ENCODE measurements at regions of chr4 and their contacts with region 1.

Region 1: DNA sequence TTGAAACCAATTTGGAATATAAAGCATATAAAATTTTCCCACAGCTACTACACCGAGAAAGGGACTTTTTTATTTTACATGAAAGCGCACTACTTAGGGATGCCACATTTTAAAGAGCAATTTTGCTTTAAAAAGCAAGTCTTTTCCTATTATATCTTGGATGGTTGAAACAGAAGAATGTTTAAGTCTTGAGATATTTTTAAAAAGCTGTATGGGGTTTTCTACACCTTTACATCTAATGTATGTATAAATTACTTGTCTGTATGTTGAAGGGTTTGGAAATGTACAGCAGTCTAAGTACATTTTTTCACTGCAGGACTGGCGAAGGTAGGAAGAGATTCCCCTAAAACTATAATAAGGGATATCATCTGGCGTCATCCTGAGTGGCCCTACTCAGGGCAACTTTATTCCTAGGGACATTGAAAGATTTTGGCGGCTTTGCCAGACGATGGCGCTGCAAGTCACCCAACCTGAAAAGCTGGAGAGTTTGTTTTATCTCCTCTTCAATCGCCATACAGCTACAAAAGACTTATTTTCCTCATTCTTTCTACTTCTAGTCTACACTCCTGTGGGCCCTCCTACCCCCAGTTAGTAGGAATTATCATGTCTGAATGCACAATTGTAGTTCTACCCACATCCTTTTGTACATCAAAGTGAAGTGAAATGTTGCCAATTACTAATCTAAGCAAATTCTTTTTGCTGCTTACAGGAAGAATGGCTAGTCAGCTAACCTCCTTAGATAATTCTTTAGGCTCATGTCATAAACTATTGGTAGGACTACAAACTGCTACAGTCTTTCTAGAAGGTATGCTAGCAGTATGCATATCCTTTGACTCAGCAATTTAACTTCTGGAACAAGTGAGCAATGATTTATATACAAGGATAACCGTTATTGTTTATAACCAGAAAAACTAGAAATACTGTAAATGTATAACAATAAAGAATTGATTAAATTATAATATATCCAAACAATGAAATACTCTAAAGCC is 782 bp upstream of the NEK1 start:
- DNase-seq: peak; percentile 67 to 86
- ATAC-seq: peak; percentile 40 to 55 (median 40)
- H3K4me3 ChIP-seq: peak overlapping the region; percentile 96
- H3K4me3 Mint-ChIP-seq: peak overlapping the region; percentile 98
- H3K27ac ChIP-seq: peak overlapping the region; percentile 99
- H3K27ac Mint-ChIP-seq: peak overlapping the region; percentile 98
- H3K4me1 ChIP-seq: peaks cover 4% of the 10 kb centered on the region
- H3K4me1 Mint-ChIP-seq: peaks cover 26 to 29% of the 10 kb centered on the region in 2 donors
- H3K27me3 ChIP-seq: no peaks in the 10 kb centered on the region
- H3K27me3 Mint-ChIP-seq: no peaks in the 10 kb centered on the region
- CTCF ChIP-seq: peak; percentile 75

Region 2: GRCh38 chr4:168480931-168481611 is 1132.1 kb before region 1 on chr4:
- intact Hi-C with region 1: loop called (anchors 2 kb)
- DNase-seq: peak; percentile 28 to 86
- ATAC-seq: peak; percentile 50 to 77 (median 64)
- H3K4me3 ChIP-seq: peak overlapping the region; percentile 71
- H3K4me3 Mint-ChIP-seq: peak overlapping the region; percentile 96
- H3K27ac ChIP-seq: peak overlapping the region; percentile 95
- H3K27ac Mint-ChIP-seq: peak overlapping the region; percentile 97 to 100
- H3K4me1 ChIP-seq: peaks cover 3% of the 10 kb centered on the region
- H3K4me1 Mint-ChIP-seq: peaks cover 41 to 49% of the 10 kb centered on the region in 2 donors
- H3K27me3 ChIP-seq: no peaks in the 10 kb centered on the region
- H3K27me3 Mint-ChIP-seq: peaks cover 9 to 16% of the 10 kb centered on the region in 2 donors
- CTCF ChIP-seq: no peak

Region 3: GRCh38 chr4:169659716-169660670 is 46.8 kb after region 1 on chr4:
- intact Hi-C with region 1: loop called (anchors 2 kb)
- DNase-seq: peak; percentile 35 to 88
- ATAC-seq: peak; percentile 94 to 98 (median 96)
- H3K4me3 ChIP-seq: peak overlapping the region; percentile 31
- H3K4me3 Mint-ChIP-seq: peak overlapping the region; percentile 85
- H3K27ac ChIP-seq: peak overlapping the region; percentile 78
- H3K27ac Mint-ChIP-seq: peak overlapping the region; percentile 93
- H3K4me1 ChIP-seq: peaks cover 4% of the 10 kb centered on the region
- H3K4me1 Mint-ChIP-seq: peaks cover 12 to 27% of the 10 kb centered on the region in 2 donors
- H3K27me3 ChIP-seq: no peaks in the 10 kb centered on the region
- H3K27me3 Mint-ChIP-seq: no peaks in the 10 kb centered on the region
- CTCF ChIP-seq: no peak

Region 4: GRCh38 chr4:169757575-169758184 is 144.5 kb after region 1 on chr4 and contains the start of gene HPF1:
- intact Hi-C with region 1: loop called (anchors 2 kb)
- DNase-seq: peak; percentile 92 to 98
- ATAC-seq: peak; percentile 96
- H3K4me3 ChIP-seq: peak within 1 kb of the TSS; percentile 91
- H3K4me3 Mint-ChIP-seq: peak within 1 kb of the TSS; percentile 87
- H3K27ac ChIP-seq: peak within 1 kb of the TSS; percentile 22
- H3K27ac Mint-ChIP-seq: peak within 1 kb of the TSS; percentile 17 to 81
- H3K4me1 ChIP-seq: peaks cover 16% of the 10 kb centered on the region
- H3K4me1 Mint-ChIP-seq: peaks cover 36 to 38% of the 10 kb centered on the region in 2 donors
- H3K27me3 ChIP-seq: no peaks in the 10 kb centered on the region
- H3K27me3 Mint-ChIP-seq: no peaks in the 10 kb centered on the region
- CTCF ChIP-seq: no peak
- total RNA-seq, gene HPF1: 12.9 to 16.1 (median 14.6) TPM

Region 5: GRCh38 chr4:169810325-169811323 is 197.5 kb after region 1 on chr4:
- intact Hi-C with region 1: loop called (anchors 1 kb)
- DNase-seq: peak in 1 of 2 donors; percentile 74
- ATAC-seq: peak in 2 of 3 donors; percentile 46 to 59
- H3K4me3 ChIP-seq: no peak overlapping the region
- H3K4me3 Mint-ChIP-seq: no peak overlapping the region
- H3K27ac ChIP-seq: no peak overlapping the region
- H3K27ac Mint-ChIP-seq: no peak overlapping the region
- H3K4me1 ChIP-seq: no peaks in the 10 kb centered on the region
- H3K4me1 Mint-ChIP-seq: no peaks in the 10 kb centered on the region
- H3K27me3 ChIP-seq: no peaks in the 10 kb centered on the region
- H3K27me3 Mint-ChIP-seq: peaks cover 9% of the 10 kb centered on the region in 2 donors
- CTCF ChIP-seq: peak; percentile 86

Region 6: DNA sequence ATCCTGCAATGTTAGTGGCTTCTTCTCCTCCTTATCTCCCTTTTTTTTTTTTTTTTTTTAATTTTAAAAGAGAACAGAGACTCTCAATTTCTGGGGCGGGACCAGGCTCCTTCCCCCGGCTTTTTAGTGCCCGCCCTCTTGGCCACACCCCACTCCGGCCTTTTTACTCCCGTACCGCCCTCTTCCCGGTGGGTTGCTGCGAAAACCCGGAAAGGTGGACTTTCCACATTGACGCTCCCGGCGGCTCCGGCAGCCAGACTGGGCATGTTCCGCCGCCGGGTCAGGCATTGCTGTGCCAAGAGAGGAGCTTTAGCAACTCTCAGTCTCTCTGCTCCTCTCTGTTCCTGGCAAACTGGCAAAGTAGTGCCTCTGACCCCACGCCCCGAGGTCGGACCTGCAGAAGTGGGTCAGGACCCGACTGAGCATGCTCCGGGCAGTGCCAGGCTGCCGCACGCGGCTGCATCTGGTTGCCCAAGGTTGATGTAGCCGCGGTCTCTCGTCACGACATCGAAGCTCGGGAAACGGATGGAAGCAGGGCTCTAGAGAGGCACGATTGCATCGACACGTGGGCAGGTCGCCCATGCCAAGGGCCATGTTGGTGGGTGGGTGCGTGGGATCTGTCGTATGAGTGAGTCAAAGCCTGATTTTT is 414.1 kb after region 1 on chr4:
- intact Hi-C with region 1: loop called (anchors 5 kb)
- DNase-seq: peak; percentile 86 to 94
- ATAC-seq: peak; percentile 72 to 84 (median 73)
- H3K4me3 ChIP-seq: peak overlapping the region; percentile 90
- H3K4me3 Mint-ChIP-seq: peak overlapping the region; percentile 94
- H3K27ac ChIP-seq: no peak overlapping the region
- H3K27ac Mint-ChIP-seq: peak overlapping the region; percentile 82 to 86
- H3K4me1 ChIP-seq: peaks cover 10% of the 10 kb centered on the region
- H3K4me1 Mint-ChIP-seq: peaks cover 14 to 16% of the 10 kb centered on the region in 2 donors
- H3K27me3 ChIP-seq: peaks cover 9% of the 10 kb centered on the region
- H3K27me3 Mint-ChIP-seq: peaks cover 7 to 20% of the 10 kb centered on the region in 2 donors
- CTCF ChIP-seq: no peak

Region 7: GRCh38 chr4:170047771-170048354 is 434.7 kb after region 1 on chr4:
- intact Hi-C with region 1: loop called (anchors 5 kb)
- DNase-seq: peak; percentile 31 to 80
- ATAC-seq: peak; percentile 54 to 60 (median 55)
- H3K4me3 ChIP-seq: no peak overlapping the region
- H3K4me3 Mint-ChIP-seq: no peak overlapping the region
- H3K27ac ChIP-seq: no peak overlapping the region
- H3K27ac Mint-ChIP-seq: no peak overlapping the region
- H3K4me1 ChIP-seq: no peaks in the 10 kb centered on the region
- H3K4me1 Mint-ChIP-seq: no peaks in the 10 kb centered on the region
- H3K27me3 ChIP-seq: no peaks in the 10 kb centered on the region
- H3K27me3 Mint-ChIP-seq: peaks cover 5 to 10% of the 10 kb centered on the region in 2 donors
- CTCF ChIP-seq: peak; percentile 79

Measured in natural killer cell (primary cell).